K562 (cell line): ENCODE measurements at regions of chr9 and their contacts with region 1.

Region 1: DNA sequence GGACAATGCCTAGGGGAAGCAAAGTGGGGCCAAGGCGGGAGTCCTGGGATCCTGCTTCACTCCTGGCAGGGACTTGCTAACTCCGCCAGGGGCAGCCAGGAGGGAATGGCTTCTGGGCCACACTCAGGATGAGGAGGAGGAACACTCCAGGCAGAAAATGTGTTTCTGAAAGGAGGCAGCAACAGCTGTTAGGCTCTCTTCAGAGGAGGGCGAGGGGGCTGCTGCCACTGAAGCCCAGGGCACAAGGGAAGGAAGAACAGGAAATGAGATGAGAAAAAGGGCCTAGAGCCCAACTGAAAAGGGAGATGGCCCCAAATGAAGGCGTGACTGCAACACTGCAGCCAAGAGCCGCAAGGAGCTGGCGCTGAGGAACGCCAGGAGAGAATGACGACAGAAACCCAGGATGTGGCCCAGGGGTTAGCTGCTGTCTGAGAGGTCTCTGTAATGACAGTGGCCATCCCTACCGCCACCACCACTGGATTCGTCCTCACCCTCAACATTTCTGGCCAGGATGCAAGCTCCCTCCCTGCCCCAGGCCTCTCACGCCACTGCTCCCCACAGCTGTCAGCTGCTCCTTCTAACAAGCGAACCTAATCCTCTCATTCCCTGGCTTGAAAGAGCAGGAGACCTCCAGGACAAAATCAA is 15.8 kb downstream of the PSMB7 start:
- DNase-seq: no peak
- ATAC-seq: no peak; the same call in 2 of the 3 replicates
- H3K4me3 ChIP-seq: no peak overlapping the region
- H3K27ac ChIP-seq: no peak overlapping the region
- H3K4me1 ChIP-seq: peaks cover 0 to 5% of the 10 kb centered on the region in 2 experiments; a peak in 2 of 5 replicates
- H3K27me3 ChIP-seq: no peaks in the 10 kb centered on the region
- CTCF ChIP-seq: no peak
- EP300 ChIP-seq: no peak
- POLR2A ChIP-seq: no peak
- RAD21 ChIP-seq: no peak

Region 2: DNA sequence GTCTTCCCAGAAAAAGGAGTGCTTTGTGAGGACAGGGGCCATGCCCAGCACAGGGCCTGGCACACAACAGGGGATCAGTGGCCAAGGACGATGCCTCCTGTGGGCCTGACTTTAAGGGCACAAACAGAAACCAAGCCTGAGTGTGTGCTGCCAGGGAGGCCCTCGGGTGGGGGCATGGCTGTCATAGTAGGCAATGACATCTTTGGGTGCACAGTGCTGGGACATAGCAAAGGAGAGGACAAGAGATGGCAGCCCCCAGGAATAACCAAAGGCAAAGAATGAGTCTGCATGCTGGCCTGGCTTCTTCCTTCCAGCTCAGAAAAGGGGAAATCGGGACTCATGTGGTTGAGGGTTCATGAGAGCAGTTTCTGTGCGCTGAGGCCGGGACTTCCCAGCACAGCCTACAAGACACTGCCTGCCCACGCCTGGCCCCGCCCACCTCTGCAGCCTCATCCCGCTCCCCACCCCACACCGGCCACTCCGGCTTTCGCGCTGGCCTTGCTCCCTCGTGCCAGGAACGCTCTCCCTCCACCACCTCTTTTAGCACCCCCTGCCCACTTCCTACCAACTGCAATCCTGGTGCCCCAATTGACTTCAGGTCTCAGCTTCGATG is 401.7 kb before region 1 on chr9:
- CTCF ChIA-PET with region 1: no interaction called
- POLR2A ChIA-PET with region 1: no interaction called
- in situ Hi-C with region 1: no loop called
- intact Hi-C with region 1: no loop called
- DNase-seq: no peak
- ATAC-seq: peak; percentile 68
- H3K4me3 ChIP-seq: no peak overlapping the region
- H3K27ac ChIP-seq: no peak overlapping the region
- H3K4me1 ChIP-seq: peaks cover 0 to 11% of the 10 kb centered on the region in 2 experiments; a peak in 2 of 5 replicates
- H3K27me3 ChIP-seq: peaks cover 53 to 60% of the 10 kb centered on the region in 2 experiments
- CTCF ChIP-seq: no peak
- EP300 ChIP-seq: no peak
- POLR2A ChIP-seq: no peak
- RAD21 ChIP-seq: no peak

Region 3: GRCh38 chr9:124386201-124386600 is 13.2 kb before region 1 on chr9:
- CTCF ChIA-PET with region 1: no interaction called
- POLR2A ChIA-PET with region 1: interaction called, 10 read pairs
- in situ Hi-C with region 1: no loop called
- intact Hi-C with region 1: no loop called
- DNase-seq: no peak
- ATAC-seq: no peak
- H3K4me3 ChIP-seq: no peak overlapping the region
- H3K27ac ChIP-seq: no peak overlapping the region
- H3K4me1 ChIP-seq: peaks cover 22 to 51% of the 10 kb centered on the region in 2 experiments
- H3K27me3 ChIP-seq: no peaks in the 10 kb centered on the region
- CTCF ChIP-seq: no peak
- EP300 ChIP-seq: no peak
- POLR2A ChIP-seq: no peak
- RAD21 ChIP-seq: no peak

Region 4: GRCh38 chr9:124467431-124468060 is 68.1 kb after region 1 on chr9:
- CTCF ChIA-PET with region 1: no interaction called
- POLR2A ChIA-PET with region 1: no interaction called
- in situ Hi-C with region 1: no loop called
- intact Hi-C with region 1: no loop called
- DNase-seq: no peak
- ATAC-seq: no peak
- H3K4me3 ChIP-seq: no peak overlapping the region
- H3K27ac ChIP-seq: no peak overlapping the region
- H3K4me1 ChIP-seq: peaks cover 0 to 21% of the 10 kb centered on the region in 2 experiments; a peak in 3 of 5 replicates
- H3K27me3 ChIP-seq: peaks cover 22 to 46% of the 10 kb centered on the region in 2 experiments; a peak in 4 of 5 replicates
- CTCF ChIP-seq: no peak
- EP300 ChIP-seq: no peak
- POLR2A ChIP-seq: no peak
- RAD21 ChIP-seq: no peak

Region 5: DNA sequence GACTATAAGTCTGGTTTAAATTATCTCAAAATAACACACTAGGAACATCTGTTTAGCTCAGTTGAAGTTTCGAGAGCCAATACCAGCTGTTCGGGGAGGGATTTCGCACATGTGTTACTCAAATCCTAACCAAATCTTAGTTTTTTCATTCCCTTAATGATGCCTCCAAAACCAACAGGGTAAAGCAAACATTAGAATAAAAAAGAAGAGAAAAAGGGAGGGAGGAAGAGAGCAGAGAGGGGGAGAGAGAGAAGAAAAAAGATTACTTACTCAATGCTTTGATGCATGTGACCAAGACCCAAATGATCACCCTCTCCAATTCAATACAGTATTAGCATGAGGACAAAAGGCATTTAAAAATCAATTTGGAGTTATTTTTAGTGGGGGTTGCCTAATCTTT is 193.8 kb after region 1 on chr9:
- CTCF ChIA-PET with region 1: no interaction called
- POLR2A ChIA-PET with region 1: no interaction called
- in situ Hi-C with region 1: no loop called
- intact Hi-C with region 1: no loop called
- DNase-seq: no peak
- ATAC-seq: no peak
- H3K4me3 ChIP-seq: no peak overlapping the region; the same call in 1 of the 2 replicates
- H3K27ac ChIP-seq: peak overlapping the region; percentile 23; the same call in 1 of the 3 replicates
- H3K4me1 ChIP-seq: peaks cover 7 to 43% of the 10 kb centered on the region in 2 experiments; a peak in 4 of 5 replicates
- H3K27me3 ChIP-seq: no peaks in the 10 kb centered on the region
- CTCF ChIP-seq: no peak
- EP300 ChIP-seq: no peak
- POLR2A ChIP-seq: no peak
- RAD21 ChIP-seq: no peak

Region 6: GRCh38 chr9:124613849-124614248 is 214.4 kb after region 1 on chr9:
- CTCF ChIA-PET with region 1: no interaction called
- POLR2A ChIA-PET with region 1: no interaction called
- in situ Hi-C with region 1: no loop called
- intact Hi-C with region 1: no loop called
- DNase-seq: no peak
- ATAC-seq: no peak
- H3K4me3 ChIP-seq: no peak overlapping the region
- H3K27ac ChIP-seq: no peak overlapping the region
- H3K4me1 ChIP-seq: peaks cover 0 to 4% of the 10 kb centered on the region in 2 experiments; a peak in 1 of 5 replicates
- H3K27me3 ChIP-seq: no peaks in the 10 kb centered on the region
- CTCF ChIP-seq: no peak
- EP300 ChIP-seq: no peak
- POLR2A ChIP-seq: no peak
- RAD21 ChIP-seq: no peak